Natural killer cell (primary cell): ENCODE measurements at regions of chr17 and their contacts with region 1.

Region 1: GRCh38 chr17:14427900-14428647 is 127.2 kb downstream of the HS3ST3B1 start:
- DNase-seq: peak; percentile 55 to 87
- ATAC-seq: peak; percentile 95 to 99 (median 98)
- H3K4me3 ChIP-seq: peak overlapping the region; percentile 13
- H3K4me3 Mint-ChIP-seq: peak overlapping the region; percentile 88
- H3K27ac ChIP-seq: peak overlapping the region; percentile 74
- H3K27ac Mint-ChIP-seq: peak overlapping the region; percentile 77 to 85
- H3K4me1 ChIP-seq: peaks cover 34% of the 10 kb centered on the region
- H3K4me1 Mint-ChIP-seq: peaks cover 54 to 58% of the 10 kb centered on the region in 2 donors
- H3K27me3 ChIP-seq: no peaks in the 10 kb centered on the region
- H3K27me3 Mint-ChIP-seq: peaks cover 0 to 2% of the 10 kb centered on the region in 2 donors
- CTCF ChIP-seq: no peak

Region 2: GRCh38 chr17:14359163-14360020 is 68.7 kb before region 1 on chr17:
- intact Hi-C with region 1: loop called (anchors 1 kb)
- DNase-seq: peak; percentile 72 to 75
- ATAC-seq: peak; percentile 91 to 99 (median 95)
- H3K4me3 ChIP-seq: no peak overlapping the region
- H3K4me3 Mint-ChIP-seq: peak overlapping the region; percentile 54
- H3K27ac ChIP-seq: no peak overlapping the region
- H3K27ac Mint-ChIP-seq: peak overlapping the region; percentile 49 to 52
- H3K4me1 ChIP-seq: peaks cover 25% of the 10 kb centered on the region
- H3K4me1 Mint-ChIP-seq: peaks cover 22 to 26% of the 10 kb centered on the region in 2 donors
- H3K27me3 ChIP-seq: peaks cover 3% of the 10 kb centered on the region
- H3K27me3 Mint-ChIP-seq: peaks cover 10 to 26% of the 10 kb centered on the region in 2 donors
- CTCF ChIP-seq: peak; percentile 48

Region 3: GRCh38 chr17:14559264-14560119 is 131.4 kb after region 1 on chr17:
- intact Hi-C with region 1: loop called (anchors 1 kb)
- DNase-seq: no peak
- ATAC-seq: peak; percentile 77 to 96 (median 89)
- H3K4me3 ChIP-seq: no peak overlapping the region
- H3K4me3 Mint-ChIP-seq: peak overlapping the region; percentile 7
- H3K27ac ChIP-seq: no peak overlapping the region
- H3K27ac Mint-ChIP-seq: peak overlapping the region; percentile 8 to 67
- H3K4me1 ChIP-seq: peaks cover 6% of the 10 kb centered on the region
- H3K4me1 Mint-ChIP-seq: peaks cover 17 to 21% of the 10 kb centered on the region in 2 donors
- H3K27me3 ChIP-seq: no peaks in the 10 kb centered on the region
- H3K27me3 Mint-ChIP-seq: peaks cover 0 to 9% of the 10 kb centered on the region in 2 donors
- CTCF ChIP-seq: no peak